Activated naive CD4-positive, alpha-beta T cell treated with anti-CD3 and anti-CD28 coated beads for 36 hours (primary cell): ENCODE measurements at regions of chr20 and their contacts with region 1.

Region 1: GRCh38 chr20:62937366-62938104 is 412 bp upstream of the GID8 start:
- DNase-seq: peak; percentile 98
- H3K4me3 Mint-ChIP-seq: peak overlapping the region; percentile 93
- H3K27ac Mint-ChIP-seq: peak overlapping the region; percentile 94
- H3K4me1 Mint-ChIP-seq: peaks cover 34% of the 10 kb centered on the region
- H3K27me3 Mint-ChIP-seq: no peaks in the 10 kb centered on the region

Region 2: GRCh38 chr20:62587757-62588402 is 349.7 kb before region 1 on chr20:
- CTCF ChIA-PET with region 1: no interaction called
- intact Hi-C with region 1: no loop called
- DNase-seq: peak; percentile 59
- H3K4me3 Mint-ChIP-seq: no peak overlapping the region
- H3K27ac Mint-ChIP-seq: no peak overlapping the region
- H3K4me1 Mint-ChIP-seq: no peaks in the 10 kb centered on the region
- H3K27me3 Mint-ChIP-seq: peaks cover 23% of the 10 kb centered on the region

Region 3: GRCh38 chr20:62887147-62887859 is 50.2 kb before region 1 on chr20:
- CTCF ChIA-PET with region 1: no interaction called
- intact Hi-C with region 1: no loop called
- DNase-seq: peak; percentile 40
- H3K4me3 Mint-ChIP-seq: no peak overlapping the region
- H3K27ac Mint-ChIP-seq: peak overlapping the region; percentile 50
- H3K4me1 Mint-ChIP-seq: peaks cover 22% of the 10 kb centered on the region
- H3K27me3 Mint-ChIP-seq: no peaks in the 10 kb centered on the region

Region 4: GRCh38 chr20:62900052-62900691 is 37.4 kb before region 1 on chr20:
- CTCF ChIA-PET with region 1: interaction called, 11 read pairs
- intact Hi-C with region 1: no loop called
- DNase-seq: peak; percentile 84
- H3K4me3 Mint-ChIP-seq: no peak overlapping the region
- H3K27ac Mint-ChIP-seq: peak overlapping the region; percentile 72
- H3K4me1 Mint-ChIP-seq: peaks cover 29% of the 10 kb centered on the region
- H3K27me3 Mint-ChIP-seq: no peaks in the 10 kb centered on the region

Region 5: DNA sequence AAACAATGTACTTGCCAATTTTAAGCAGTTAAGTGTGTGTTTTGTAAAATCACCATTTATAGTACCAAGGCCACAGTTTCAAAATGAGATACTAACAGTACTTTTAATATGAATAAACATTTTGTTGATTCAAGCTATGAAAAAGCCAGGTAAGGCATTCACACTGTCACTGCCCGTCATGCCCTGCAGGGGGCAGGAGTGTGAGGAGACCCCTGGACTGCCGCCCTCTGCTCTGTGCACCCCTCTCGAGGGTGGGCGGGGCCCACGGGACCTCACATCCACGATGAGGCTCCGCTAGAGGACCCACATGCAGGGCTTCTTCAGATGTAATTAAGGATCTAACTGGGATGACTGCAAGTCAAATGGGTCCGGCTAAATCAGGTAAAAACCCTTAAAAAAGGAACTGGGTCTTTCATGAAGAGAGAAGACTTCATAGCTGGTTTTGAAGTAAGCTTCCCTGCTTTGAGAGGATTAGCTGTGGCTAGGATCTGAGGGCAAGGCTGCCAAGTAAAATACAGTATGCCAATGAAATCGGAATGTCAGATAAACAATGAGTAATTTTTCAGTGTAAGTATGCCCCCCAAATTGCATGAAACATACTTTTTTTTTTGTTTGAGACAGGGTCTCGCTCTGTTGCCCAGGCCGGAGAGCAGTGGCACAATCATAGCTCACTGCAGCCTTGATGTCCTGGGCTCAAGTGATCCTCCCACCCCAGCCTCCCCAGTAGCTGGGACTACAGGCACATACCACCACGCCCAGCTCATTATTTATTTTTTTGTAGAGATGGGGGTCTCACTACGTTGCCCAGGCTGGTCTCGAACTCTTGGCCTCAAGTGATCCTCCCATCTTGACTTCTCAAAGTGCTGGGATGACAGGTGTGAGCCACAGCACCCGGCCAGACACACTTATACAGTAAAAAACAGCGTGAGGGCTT is 29.9 kb before region 1 on chr20:
- CTCF ChIA-PET with region 1: interaction called, 10 read pairs
- intact Hi-C with region 1: no loop called
- DNase-seq: peak; percentile 38
- H3K4me3 Mint-ChIP-seq: no peak overlapping the region
- H3K27ac Mint-ChIP-seq: peak overlapping the region; percentile 30
- H3K4me1 Mint-ChIP-seq: peaks cover 2% of the 10 kb centered on the region
- H3K27me3 Mint-ChIP-seq: no peaks in the 10 kb centered on the region

Region 6: DNA sequence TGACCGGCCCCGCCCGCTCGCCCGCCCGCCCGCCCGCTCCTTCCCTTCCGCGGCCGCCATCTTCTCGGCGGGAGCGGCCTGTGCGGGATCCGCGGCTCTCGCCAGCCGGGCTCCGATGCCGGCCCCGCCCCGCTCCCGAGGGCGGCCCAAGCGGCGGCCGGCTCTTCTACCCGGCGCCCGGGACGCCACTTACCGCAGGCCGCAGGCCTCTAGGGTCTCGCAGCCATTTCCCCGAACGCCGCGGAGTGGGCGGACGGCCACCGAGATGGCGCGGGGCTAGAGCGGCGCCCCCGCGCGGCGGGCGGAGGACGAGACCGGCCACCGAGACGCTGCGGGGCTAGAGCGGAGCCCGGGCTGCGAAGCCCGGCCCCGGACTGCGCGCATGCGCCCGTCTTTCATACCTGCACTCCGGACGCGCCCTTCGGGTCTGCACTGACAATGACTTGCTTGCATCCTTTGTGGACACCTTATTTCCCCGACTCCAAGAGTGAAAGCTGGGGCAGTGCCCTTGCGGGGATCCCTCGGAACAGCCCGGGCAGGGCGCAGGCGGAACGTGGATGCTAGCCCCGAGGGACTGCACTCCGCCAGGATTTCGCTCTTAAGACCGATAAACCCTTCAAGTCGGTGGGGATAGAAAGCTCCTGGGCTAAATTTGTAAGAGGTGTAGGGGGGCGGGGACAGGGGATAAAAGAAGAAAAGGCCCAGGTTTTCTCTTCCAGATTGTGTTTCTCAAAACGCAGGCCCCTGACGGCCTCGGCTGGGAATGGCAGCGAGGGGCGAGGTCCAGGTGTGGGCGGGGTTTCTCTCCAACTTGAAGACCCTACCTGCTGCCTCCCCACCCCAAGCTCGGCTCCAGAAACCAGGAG is 11.1 kb before region 1 on chr20 and contains the start of gene DIDO1:
- CTCF ChIA-PET with region 1: interaction called, 8 read pairs
- intact Hi-C with region 1: loop called (anchors 1 kb)
- DNase-seq: peak; percentile 91
- H3K4me3 Mint-ChIP-seq: peak within 1 kb of the TSS; percentile 86
- H3K27ac Mint-ChIP-seq: peak within 1 kb of the TSS; percentile 91
- H3K4me1 Mint-ChIP-seq: peaks cover 69% of the 10 kb centered on the region
- H3K27me3 Mint-ChIP-seq: no peaks in the 10 kb centered on the region
- total RNA-seq, gene DIDO1: 49.5 to 50.3 TPM

Region 7: GRCh38 chr20:62953839-62954703 is 16.5 kb after region 1 on chr20:
- CTCF ChIA-PET with region 1: interaction called, 5 read pairs
- intact Hi-C with region 1: loop called (anchors 1 kb)
- DNase-seq: peak; percentile 81
- H3K4me3 Mint-ChIP-seq: peak overlapping the region; percentile 69
- H3K27ac Mint-ChIP-seq: peak overlapping the region; percentile 46
- H3K4me1 Mint-ChIP-seq: peaks cover 34% of the 10 kb centered on the region
- H3K27me3 Mint-ChIP-seq: no peaks in the 10 kb centered on the region

Region 8: GRCh38 chr20:62972270-62973032 is 34.9 kb after region 1 on chr20:
- CTCF ChIA-PET with region 1: no interaction called
- intact Hi-C with region 1: no loop called
- DNase-seq: peak; percentile 91
- H3K4me3 Mint-ChIP-seq: no peak overlapping the region
- H3K27ac Mint-ChIP-seq: no peak overlapping the region
- H3K4me1 Mint-ChIP-seq: peaks cover 12% of the 10 kb centered on the region
- H3K27me3 Mint-ChIP-seq: peaks cover 29% of the 10 kb centered on the region

Region 9: DNA sequence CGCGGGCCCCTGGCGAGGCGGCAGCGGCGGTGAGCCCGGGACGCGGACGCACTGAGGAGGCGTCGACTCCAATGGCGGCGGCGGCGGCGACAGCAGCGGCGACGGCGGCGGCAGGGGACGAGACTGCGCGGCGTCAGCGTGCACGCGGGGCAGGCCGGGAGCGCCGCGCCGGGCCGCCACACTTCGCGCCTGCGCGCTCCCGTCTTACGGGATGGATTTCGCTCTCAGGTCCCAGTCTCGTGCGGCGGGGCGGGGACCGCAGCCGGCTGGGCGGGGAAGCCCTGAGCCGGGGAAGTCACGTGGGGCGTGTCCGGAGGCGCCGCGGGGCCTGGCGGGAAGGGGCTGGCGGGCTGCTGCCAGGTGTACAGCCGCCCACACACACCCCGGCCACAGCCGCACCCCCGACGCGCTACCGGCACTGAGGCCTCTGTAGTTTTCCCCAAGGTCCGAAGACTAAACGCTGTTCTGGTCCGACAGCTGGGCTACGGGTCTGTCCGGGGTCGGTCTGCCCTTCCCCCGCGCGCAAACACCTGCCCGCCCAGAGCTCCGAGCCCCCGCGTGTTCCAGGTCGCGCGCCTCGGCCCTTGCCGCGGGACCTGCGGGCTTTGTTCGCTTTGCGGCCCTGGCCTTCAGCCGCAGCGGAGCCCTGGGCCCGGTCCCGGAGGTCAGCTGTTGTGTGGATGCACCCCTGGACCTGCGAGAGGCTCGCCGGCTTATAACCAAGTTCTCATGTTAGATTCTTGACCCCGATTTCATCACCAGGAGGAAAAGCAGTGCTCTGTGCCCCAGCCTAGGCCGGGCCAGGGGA is 278.7 kb after region 1 on chr20 and contains the start of gene YTHDF1:
- CTCF ChIA-PET with region 1: no interaction called
- intact Hi-C with region 1: loop called (anchors 5 kb)
- DNase-seq: peak; percentile 97
- H3K4me3 Mint-ChIP-seq: peak within 1 kb of the TSS; percentile 94
- H3K27ac Mint-ChIP-seq: peak within 1 kb of the TSS; percentile 87
- H3K4me1 Mint-ChIP-seq: peaks cover 47% of the 10 kb centered on the region
- H3K27me3 Mint-ChIP-seq: no peaks in the 10 kb centered on the region
- total RNA-seq, gene YTHDF1: 27.6 to 27.8 TPM